Heart left ventricle (tissue), 16 donors: ENCODE measurements at regions of chr11 and their contacts with region 1.

Region 1: GRCh38 chr11:70610566-70611565 is 212.5 kb downstream of the CTTN start:
- DNase-seq: peak in 1 of 5 donors; percentile 30
- ATAC-seq: peak in 2 of 4 donors; percentile 39 to 55
- H3K4me3 ChIP-seq: no peak overlapping the region
- H3K27ac ChIP-seq: no peak overlapping the region
- H3K4me1 ChIP-seq: peaks cover 0 to 14% (median 0%) of the 10 kb centered on the region in 12 donors
- H3K27me3 ChIP-seq: peaks cover 0 to 18% (median 6%) of the 10 kb centered on the region in 9 donors
- CTCF ChIP-seq: no peak
- POLR2A ChIP-seq: no peak

Region 2: GRCh38 chr11:70535191-70535971 is 75.5 kb before region 1 on chr11:
- intact Hi-C with region 1: loop called in 1 of 10 experiments (anchors 2 kb)
- DNase-seq: peak in 2 of 5 donors; percentile 1 to 11
- ATAC-seq: no peak
- H3K4me3 ChIP-seq: no peak overlapping the region
- H3K27ac ChIP-seq: no peak overlapping the region
- H3K4me1 ChIP-seq: no peaks in the 10 kb centered on the region
- H3K27me3 ChIP-seq: no peaks in the 10 kb centered on the region
- CTCF ChIP-seq: no peak
- POLR2A ChIP-seq: no peak

Region 3: GRCh38 chr11:70675697-70676374 is 65.0 kb after region 1 on chr11:
- intact Hi-C with region 1: no loop called
- DNase-seq: no peak
- ATAC-seq: no peak
- H3K4me3 ChIP-seq: no peak overlapping the region
- H3K27ac ChIP-seq: no peak overlapping the region
- H3K4me1 ChIP-seq: no peaks in the 10 kb centered on the region
- H3K27me3 ChIP-seq: peaks cover 0 to 7% (median 0%) of the 10 kb centered on the region in 9 donors
- CTCF ChIP-seq: no peak
- POLR2A ChIP-seq: no peak